Gastrocnemius medialis (tissue), 4 donors: ENCODE measurements at regions of chr14 and their contacts with region 1.

Region 1: GRCh38 chr14:70188659-70189455 is at the start of gene SLC8A3:
- DNase-seq: peak; percentile 81 to 83
- ATAC-seq: peak; percentile 79 to 83
- H3K4me3 ChIP-seq: peak within 1 kb of the TSS; percentile 61 to 84 (median 74)
- H3K27ac ChIP-seq: peak within 1 kb of the TSS; percentile 92 to 95 (median 94)
- H3K4me1 ChIP-seq: peaks cover 28 to 42% of the 10 kb centered on the region in 2 donors
- H3K27me3 ChIP-seq: no peaks in the 10 kb centered on the region
- CTCF ChIP-seq: no peak
- POLR2A ChIP-seq: peak; percentile 87 to 95
- total RNA-seq, gene SLC8A3: 8.5 to 14.1 (median 12.6) TPM

Region 2: GRCh38 chr14:69637503-69638030 is 551.3 kb before region 1 on chr14:
- in situ Hi-C with region 1: no loop called
- intact Hi-C with region 1: loop called (anchors 10 kb)
- DNase-seq: peak; percentile 70 to 76
- ATAC-seq: peak; percentile 70 to 77
- H3K4me3 ChIP-seq: no peak overlapping the region
- H3K27ac ChIP-seq: peak overlapping the region; percentile 50 to 76 (median 64)
- H3K4me1 ChIP-seq: peaks cover 63 to 71% of the 10 kb centered on the region in 2 donors
- H3K27me3 ChIP-seq: no peaks in the 10 kb centered on the region
- CTCF ChIP-seq: no peak
- POLR2A ChIP-seq: peak in 1 of 2 donors; percentile 16

Region 3: GRCh38 chr14:70045844-70046535 is 142.9 kb before region 1 on chr14:
- in situ Hi-C with region 1: no loop called
- intact Hi-C with region 1: loop called (anchors 5 kb)
- DNase-seq: peak; percentile 32 to 65
- ATAC-seq: peak; percentile 51 to 81
- H3K4me3 ChIP-seq: no peak overlapping the region
- H3K27ac ChIP-seq: no peak overlapping the region
- H3K4me1 ChIP-seq: no peaks in the 10 kb centered on the region
- H3K27me3 ChIP-seq: no peaks in the 10 kb centered on the region
- CTCF ChIP-seq: peak; percentile 49 to 79 (median 74)
- POLR2A ChIP-seq: no peak

Region 4: GRCh38 chr14:70148911-70149595 is 39.8 kb before region 1 on chr14:
- in situ Hi-C with region 1: no loop called
- intact Hi-C with region 1: loop called (anchors 1 kb)
- DNase-seq: peak; percentile 11 to 49
- ATAC-seq: peak; percentile 90 to 92
- H3K4me3 ChIP-seq: no peak overlapping the region
- H3K27ac ChIP-seq: peak overlapping the region; percentile 68 to 84 (median 70)
- H3K4me1 ChIP-seq: peaks cover 20 to 28% of the 10 kb centered on the region in 2 donors
- H3K27me3 ChIP-seq: no peaks in the 10 kb centered on the region
- CTCF ChIP-seq: no peak
- POLR2A ChIP-seq: no peak

Region 5: GRCh38 chr14:70254476-70254961 is 65.7 kb after region 1 on chr14:
- in situ Hi-C with region 1: no loop called
- intact Hi-C with region 1: loop called (anchors 5 kb)
- DNase-seq: peak in 1 of 2 donors; percentile 37
- ATAC-seq: peak in 1 of 2 donors; percentile 64
- H3K4me3 ChIP-seq: peak overlapping the region; percentile 49 to 71 (median 52)
- H3K27ac ChIP-seq: no peak overlapping the region
- H3K4me1 ChIP-seq: no peaks in the 10 kb centered on the region
- H3K27me3 ChIP-seq: peaks cover 0 to 3% (median 0%) of the 10 kb centered on the region in 3 donors
- CTCF ChIP-seq: no peak
- POLR2A ChIP-seq: no peak

Region 6: GRCh38 chr14:70268760-70269159 is 79.9 kb after region 1 on chr14:
- in situ Hi-C with region 1: no loop called
- intact Hi-C with region 1: no loop called
- DNase-seq: no peak
- ATAC-seq: no peak
- H3K4me3 ChIP-seq: no peak overlapping the region
- H3K27ac ChIP-seq: no peak overlapping the region
- H3K4me1 ChIP-seq: no peaks in the 10 kb centered on the region
- H3K27me3 ChIP-seq: no peaks in the 10 kb centered on the region
- CTCF ChIP-seq: no peak
- POLR2A ChIP-seq: no peak